ENCODE measurements at regions of chr14 and their contacts with region 1.

Region 1: DNA sequence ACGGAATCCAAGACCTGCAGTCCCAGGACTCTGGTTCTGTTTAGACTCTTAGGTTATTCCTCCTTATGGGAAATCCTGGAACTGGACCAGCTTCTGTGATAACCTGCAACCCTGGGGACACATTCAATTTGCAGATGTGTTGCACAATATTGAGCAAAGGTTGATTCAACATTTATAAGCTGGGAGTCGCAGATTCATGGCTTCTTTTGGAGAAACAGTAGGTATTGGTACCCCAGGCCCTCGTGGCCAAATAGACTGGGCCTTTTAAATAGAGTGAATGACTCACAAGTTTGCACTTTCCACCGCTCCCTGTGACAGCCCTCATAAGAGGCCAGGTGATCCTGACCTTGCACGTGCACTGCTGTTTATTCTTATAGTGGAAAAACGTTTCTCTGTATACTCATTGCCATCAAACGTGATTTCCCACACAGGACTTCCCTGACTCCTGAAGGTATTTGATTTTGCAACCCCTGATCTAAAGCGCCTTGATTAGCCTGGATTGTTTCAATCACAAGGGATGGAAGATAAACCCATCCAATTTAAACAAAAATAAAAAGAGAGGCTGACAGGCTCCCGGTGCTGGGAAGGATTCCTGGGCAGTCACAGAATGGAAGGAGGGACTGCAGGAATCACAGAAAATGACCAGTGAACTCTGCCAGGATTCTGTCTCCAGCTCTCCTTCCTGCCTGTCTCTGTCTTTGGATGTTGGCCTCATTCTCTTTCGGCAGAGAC is 98.0 kb downstream of the VCPKMT start:
- DNase-seq: peak; percentile 47
- H3K4me3 Mint-ChIP-seq: no peak overlapping the region
- H3K27ac Mint-ChIP-seq: peak overlapping the region; percentile 51
- H3K4me1 Mint-ChIP-seq: peaks cover 12% of the 10 kb centered on the region
- H3K27me3 Mint-ChIP-seq: no peaks in the 10 kb centered on the region
- CTCF ChIP-seq: no peak

Region 2: GRCh38 chr14:49497725-49498348 is 520.5 kb before region 1 on chr14:
- CTCF ChIA-PET with region 1: no interaction called
- POLR2A ChIA-PET with region 1: no interaction called
- intact Hi-C with region 1: no loop called
- DNase-seq: peak; percentile 68
- H3K4me3 Mint-ChIP-seq: no peak overlapping the region
- H3K27ac Mint-ChIP-seq: no peak overlapping the region
- H3K4me1 Mint-ChIP-seq: no peaks in the 10 kb centered on the region
- H3K27me3 Mint-ChIP-seq: no peaks in the 10 kb centered on the region
- CTCF ChIP-seq: peak; percentile 78

Region 3: GRCh38 chr14:50049703-50050570 is 31.6 kb after region 1 on chr14:
- CTCF ChIA-PET with region 1: no interaction called
- POLR2A ChIA-PET with region 1: no interaction called
- intact Hi-C with region 1: no loop called
- DNase-seq: no peak
- H3K4me3 Mint-ChIP-seq: no peak overlapping the region
- H3K27ac Mint-ChIP-seq: no peak overlapping the region
- H3K4me1 Mint-ChIP-seq: peaks cover 10% of the 10 kb centered on the region
- H3K27me3 Mint-ChIP-seq: no peaks in the 10 kb centered on the region
- CTCF ChIP-seq: no peak

Region 4: GRCh38 chr14:50060871-50061663 is 42.7 kb after region 1 on chr14:
- CTCF ChIA-PET with region 1: interaction called, 3 read pairs
- POLR2A ChIA-PET with region 1: interaction called, 11 read pairs
- intact Hi-C with region 1: no loop called
- DNase-seq: peak; percentile 96
- H3K4me3 Mint-ChIP-seq: no peak overlapping the region
- H3K27ac Mint-ChIP-seq: peak overlapping the region; percentile 84
- H3K4me1 Mint-ChIP-seq: peaks cover 20% of the 10 kb centered on the region
- H3K27me3 Mint-ChIP-seq: no peaks in the 10 kb centered on the region
- CTCF ChIP-seq: no peak